ENCODE measurements at regions of chr6 and their contacts with region 1.

Region 1: DNA sequence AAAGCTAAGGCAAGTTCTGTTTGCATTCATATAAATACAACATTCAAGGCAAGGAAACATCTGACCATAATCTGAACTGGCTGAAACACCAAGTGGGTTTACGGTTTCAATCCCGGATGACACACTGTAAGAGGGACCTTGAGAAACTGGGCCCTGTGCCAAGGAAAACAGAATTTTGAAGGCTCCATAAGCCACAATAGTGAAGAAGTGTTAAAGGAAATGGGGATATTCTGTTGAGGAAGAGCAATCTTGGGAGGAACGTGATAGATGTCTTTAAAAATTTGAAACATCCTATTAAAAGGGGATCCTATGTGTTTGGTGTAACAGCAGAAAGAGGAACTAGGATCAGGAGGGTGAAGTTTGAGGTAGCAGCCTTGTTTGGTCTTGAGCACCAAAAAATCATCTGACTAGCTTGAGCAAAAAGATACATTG is 82.4 kb upstream of the TAB2 start:
- DNase-seq: no peak
- H3K4me3 Mint-ChIP-seq: peak overlapping the region; percentile 75
- H3K27ac Mint-ChIP-seq: peak overlapping the region; percentile 97
- H3K4me1 Mint-ChIP-seq: peaks cover 71% of the 10 kb centered on the region
- H3K27me3 Mint-ChIP-seq: no peaks in the 10 kb centered on the region

Region 2: DNA sequence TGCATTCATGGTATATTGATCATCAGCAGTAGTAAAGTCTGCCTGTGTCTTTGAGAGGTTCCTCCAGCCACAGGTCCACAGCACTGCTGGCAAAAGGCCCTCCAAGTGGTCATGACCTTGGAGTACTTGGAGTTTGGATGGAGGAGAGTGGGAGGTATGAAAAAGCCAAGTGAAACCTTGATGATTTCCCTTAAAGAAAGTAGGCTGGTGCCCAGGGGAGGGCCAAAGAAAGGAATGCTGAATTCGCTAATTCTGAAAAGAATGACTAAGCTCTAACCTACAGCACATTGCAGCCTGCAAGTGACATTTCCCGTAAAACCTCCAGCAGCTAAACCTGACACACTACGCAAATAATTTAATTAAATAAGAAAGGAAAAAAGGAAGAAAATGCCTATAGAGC is 141.0 kb before region 1 on chr6:
- intact Hi-C with region 1: loop called (anchors 2 kb)
- DNase-seq: no peak
- H3K4me3 Mint-ChIP-seq: peak overlapping the region; percentile 64
- H3K27ac Mint-ChIP-seq: peak overlapping the region; percentile 88
- H3K4me1 Mint-ChIP-seq: peaks cover 78% of the 10 kb centered on the region
- H3K27me3 Mint-ChIP-seq: no peaks in the 10 kb centered on the region

Region 3: DNA sequence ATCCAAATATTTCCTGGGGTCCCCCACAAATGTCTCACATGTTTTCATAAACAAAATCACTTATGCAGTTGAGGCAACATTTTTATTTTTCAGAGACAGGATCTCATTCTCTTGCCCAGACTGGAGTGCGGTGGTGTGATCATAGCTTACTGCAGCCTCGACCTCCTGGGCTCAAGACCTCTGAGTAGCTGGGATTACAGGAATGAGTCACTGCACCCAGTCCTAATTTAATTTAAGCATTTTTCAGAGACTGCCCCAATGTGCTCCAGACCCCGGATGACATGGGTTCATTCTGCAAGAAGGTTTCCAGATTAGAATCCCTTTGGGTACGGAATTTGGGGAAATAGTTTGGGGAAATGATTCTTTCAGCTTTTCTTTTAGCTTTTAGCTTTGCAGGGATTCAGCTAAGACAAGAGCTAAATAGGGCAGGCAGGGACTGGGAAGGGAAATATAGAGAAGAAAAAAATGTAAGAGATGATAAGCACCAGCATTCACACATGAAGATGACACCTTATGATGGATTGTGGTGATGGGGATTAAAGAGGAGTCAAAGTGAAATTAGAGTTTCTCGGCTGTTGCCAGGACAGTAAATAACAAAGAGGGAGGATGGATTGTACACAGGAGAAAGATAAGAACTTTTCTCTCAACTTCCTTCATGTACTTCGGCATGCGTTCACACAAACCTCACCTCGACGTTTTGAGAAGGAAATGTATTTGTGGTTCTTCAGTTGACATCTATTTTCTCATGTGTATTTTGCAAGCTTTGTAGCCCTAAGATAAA is 87.0 kb before region 1 on chr6:
- intact Hi-C with region 1: loop called (anchors 1 kb)
- DNase-seq: peak; percentile 49
- H3K4me3 Mint-ChIP-seq: peak overlapping the region; percentile 34
- H3K27ac Mint-ChIP-seq: peak overlapping the region; percentile 96
- H3K4me1 Mint-ChIP-seq: peaks cover 89% of the 10 kb centered on the region
- H3K27me3 Mint-ChIP-seq: no peaks in the 10 kb centered on the region

Region 4: DNA sequence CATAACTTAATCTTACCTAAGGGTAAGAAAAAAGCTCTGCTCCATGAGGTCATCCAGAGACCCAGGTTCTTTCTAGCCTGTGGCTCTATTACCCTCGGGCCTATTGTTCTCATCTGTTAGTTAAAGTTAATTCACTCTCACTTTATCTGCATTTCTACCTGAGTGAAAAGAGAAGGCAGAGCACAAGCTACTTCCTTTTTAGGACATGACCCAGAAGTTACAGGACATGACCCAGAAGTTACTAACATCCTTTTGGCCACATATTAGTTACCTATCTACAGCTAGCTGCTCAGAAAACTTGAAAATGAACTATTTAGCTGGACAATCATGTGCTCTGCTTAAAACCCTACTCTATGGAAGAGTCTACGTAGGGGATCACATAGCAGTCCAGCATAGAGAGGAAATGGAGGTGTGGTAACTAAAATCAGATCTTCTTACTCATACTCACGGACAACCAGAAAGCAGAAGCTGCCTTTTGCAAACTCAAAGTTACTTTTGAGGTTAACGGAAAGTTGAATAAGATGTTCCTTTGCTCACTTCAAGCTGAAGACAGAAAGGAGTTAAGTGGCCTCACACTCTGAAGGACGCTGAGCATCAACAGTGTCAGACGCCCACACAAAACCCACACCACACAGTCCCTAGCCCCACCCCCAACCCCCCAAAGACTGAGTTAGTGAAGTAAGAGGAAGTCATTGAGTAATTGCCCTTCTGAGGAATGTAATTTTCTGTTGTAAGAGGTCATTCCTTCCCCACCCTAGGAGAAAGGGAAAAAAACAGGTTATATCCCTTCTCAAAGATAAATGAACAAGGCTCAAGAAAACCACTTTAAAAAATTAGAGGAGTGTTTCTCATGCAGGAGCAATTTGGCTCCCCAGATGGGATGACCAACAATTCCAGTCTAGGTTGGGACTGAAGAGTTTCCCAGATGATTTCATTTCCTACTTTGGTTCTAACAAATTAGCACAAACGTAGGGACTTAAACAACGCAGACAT is 36.5 kb after region 1 on chr6:
- intact Hi-C with region 1: loop called (anchors 1 kb)
- DNase-seq: no peak
- H3K4me3 Mint-ChIP-seq: peak overlapping the region; percentile 62
- H3K27ac Mint-ChIP-seq: peak overlapping the region; percentile 94
- H3K4me1 Mint-ChIP-seq: peaks cover 56% of the 10 kb centered on the region
- H3K27me3 Mint-ChIP-seq: no peaks in the 10 kb centered on the region

Region 5: GRCh38 chr6:149389509-149390297 is 154.6 kb after region 1 on chr6:
- intact Hi-C with region 1: loop called (anchors 5 kb)
- DNase-seq: no peak
- H3K4me3 Mint-ChIP-seq: no peak overlapping the region
- H3K27ac Mint-ChIP-seq: peak overlapping the region; percentile 45
- H3K4me1 Mint-ChIP-seq: peaks cover 82% of the 10 kb centered on the region
- H3K27me3 Mint-ChIP-seq: no peaks in the 10 kb centered on the region

Region 6: GRCh38 chr6:149499066-149499465 is 263.9 kb after region 1 on chr6:
- intact Hi-C with region 1: loop called (anchors 1 kb)
- DNase-seq: no peak
- H3K4me3 Mint-ChIP-seq: no peak overlapping the region
- H3K27ac Mint-ChIP-seq: peak overlapping the region; percentile 83
- H3K4me1 Mint-ChIP-seq: peaks cover 78% of the 10 kb centered on the region
- H3K27me3 Mint-ChIP-seq: no peaks in the 10 kb centered on the region

Measured in activated T-helper 1 cell treated with anti-CD3 and anti-CD28 coated beads, Interleukin-12 subunit alpha, Interleukin-12 subunit beta, Interleukin-2, Interleukin-4 antibody, amounts not matched to agents 30 ng/mL and 10 ng/mL and 1 ng/mL, durations not matched to agents 14 hours and 24 hours and 36 hours (primary cell).